H1 (cell line): ENCODE measurements at regions of chr19 and their contacts with region 1.

Region 1: DNA sequence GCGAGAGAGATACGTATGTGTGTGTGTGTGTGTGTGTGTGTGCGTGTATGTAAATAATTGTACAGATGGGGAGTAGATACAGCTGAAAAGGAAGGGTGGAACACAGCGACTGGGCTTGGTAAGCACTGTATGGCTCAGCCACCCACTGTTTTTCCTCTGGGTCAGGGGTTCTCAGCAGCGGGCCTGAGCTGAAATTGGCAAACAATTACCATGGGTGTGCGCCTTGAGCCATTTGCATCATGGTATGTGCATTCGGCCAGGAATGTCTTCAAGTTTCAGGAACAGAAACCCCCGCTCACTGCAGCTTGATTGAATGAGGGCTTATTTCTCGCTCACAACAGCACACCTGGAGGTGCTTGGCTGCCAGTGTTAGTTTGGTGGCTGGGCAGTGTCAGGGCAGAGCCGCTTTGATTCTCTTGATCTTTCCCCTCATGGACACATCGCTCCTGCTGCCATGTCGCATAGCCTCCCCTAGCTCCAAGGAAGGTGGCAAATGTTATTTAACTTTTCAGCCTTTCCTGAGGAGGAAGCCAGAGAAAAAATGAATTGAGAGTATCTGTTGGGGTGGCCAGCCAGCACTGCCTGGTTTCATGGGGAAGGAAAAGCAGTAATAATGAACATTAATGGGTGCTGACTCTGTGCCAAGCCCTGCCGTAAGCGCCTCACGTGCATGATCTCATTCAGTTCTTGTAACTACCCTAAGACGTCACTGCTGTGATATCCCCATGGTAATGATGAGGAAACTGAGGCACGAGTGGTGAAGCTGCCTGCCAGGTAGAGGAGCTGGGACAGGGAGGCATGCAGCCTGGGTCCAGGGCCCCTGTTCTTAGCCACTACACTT is 126.9 kb downstream of the SIPA1L3 start:
- DNase-seq: peak in 1 of 2 experiments; percentile 25
- H3K4me3 ChIP-seq: no peak overlapping the region
- H3K27ac ChIP-seq: peak overlapping the region; percentile 16; the same call in 1 of the 2 replicates
- H3K4me1 ChIP-seq: peaks cover 7 to 19% (median 14%) of the 10 kb centered on the region in 4 experiments
- H3K27me3 ChIP-seq: no peaks in the 10 kb centered on the region
- CTCF ChIP-seq: peak; percentile 32 to 55 (median 41)
- EP300 ChIP-seq: no peak
- POLR2A ChIP-seq: no peak
- RAD21 ChIP-seq: peak; percentile 40 to 48; a peak in 3 of 4 replicates

Region 2: DNA sequence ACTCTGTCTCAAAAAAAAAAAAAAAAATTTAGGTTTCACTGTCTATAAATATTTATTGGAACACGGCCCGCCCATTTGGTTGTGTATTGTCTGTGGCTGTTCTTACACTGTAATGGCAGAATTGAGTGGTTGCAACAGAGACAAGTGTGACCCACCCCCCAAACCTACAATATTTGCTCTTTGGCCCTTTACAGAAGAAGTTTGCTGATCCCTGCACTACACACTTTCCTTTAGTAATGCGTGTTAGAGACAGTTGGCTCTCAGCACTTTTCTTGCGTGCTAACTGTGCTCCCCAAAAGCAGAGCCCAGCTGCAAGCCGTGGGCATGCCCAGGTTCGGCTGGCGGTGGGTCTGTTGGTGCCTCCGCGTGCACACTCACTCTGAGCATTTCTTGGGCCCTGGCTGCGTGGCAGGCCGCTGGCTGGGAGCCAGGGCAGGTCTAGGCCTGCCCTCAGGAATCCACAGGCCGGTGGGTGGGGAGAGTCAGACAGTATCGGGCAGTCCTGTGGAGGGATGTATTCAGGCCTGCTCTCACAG is 54.3 kb before region 1 on chr19:
- CTCF ChIA-PET with region 1: no interaction called
- POLR2A ChIA-PET with region 1: no interaction called
- DNase-seq: no peak
- H3K4me3 ChIP-seq: no peak overlapping the region
- H3K27ac ChIP-seq: peak overlapping the region; percentile 28; the same call in 1 of the 2 replicates
- H3K4me1 ChIP-seq: peaks cover 0 to 6% (median 1%) of the 10 kb centered on the region in 4 experiments; a peak in 1 of 7 replicates
- H3K27me3 ChIP-seq: no peaks in the 10 kb centered on the region
- CTCF ChIP-seq: no peak
- EP300 ChIP-seq: no peak
- POLR2A ChIP-seq: no peak
- RAD21 ChIP-seq: no peak

Region 3: GRCh38 chr19:38044267-38045111 is 10.6 kb after region 1 on chr19:
- CTCF ChIA-PET with region 1: interaction called, 11 read pairs
- POLR2A ChIA-PET with region 1: interaction called, 5 read pairs
- DNase-seq: no peak
- H3K4me3 ChIP-seq: no peak overlapping the region
- H3K27ac ChIP-seq: no peak overlapping the region
- H3K4me1 ChIP-seq: peaks cover 14 to 33% (median 30%) of the 10 kb centered on the region in 4 experiments
- H3K27me3 ChIP-seq: no peaks in the 10 kb centered on the region
- CTCF ChIP-seq: no peak
- EP300 ChIP-seq: no peak
- POLR2A ChIP-seq: no peak
- RAD21 ChIP-seq: peak; percentile 22 to 36; a peak in 3 of 4 replicates

Region 4: GRCh38 chr19:38101723-38102122 is 67.8 kb after region 1 on chr19:
- CTCF ChIA-PET with region 1: no interaction called
- POLR2A ChIA-PET with region 1: no interaction called
- DNase-seq: no peak
- H3K4me3 ChIP-seq: no peak overlapping the region
- H3K27ac ChIP-seq: no peak overlapping the region
- H3K4me1 ChIP-seq: no peaks in the 10 kb centered on the region
- H3K27me3 ChIP-seq: no peaks in the 10 kb centered on the region
- CTCF ChIP-seq: no peak
- EP300 ChIP-seq: no peak
- POLR2A ChIP-seq: no peak
- RAD21 ChIP-seq: no peak